Activated CD8-positive, alpha-beta memory T cell treated with anti-CD3 and anti-CD28 coated beads, Interleukin-2, amount 10 ng/mL, durations not matched to agents 7 days and 5 days (primary cell): ENCODE measurements at regions of chr7 and their contacts with region 1.

Region 1: GRCh38 chr7:95511716-95512260 is 26.0 kb downstream of the ASB4 start:
- DNase-seq: peak; percentile 78
- ATAC-seq: peak; percentile 86
- H3K4me3 Mint-ChIP-seq: no peak overlapping the region
- H3K27ac Mint-ChIP-seq: no peak overlapping the region
- H3K4me1 Mint-ChIP-seq: peaks cover 3% of the 10 kb centered on the region
- H3K27me3 Mint-ChIP-seq: peaks cover 43% of the 10 kb centered on the region

Region 2: DNA sequence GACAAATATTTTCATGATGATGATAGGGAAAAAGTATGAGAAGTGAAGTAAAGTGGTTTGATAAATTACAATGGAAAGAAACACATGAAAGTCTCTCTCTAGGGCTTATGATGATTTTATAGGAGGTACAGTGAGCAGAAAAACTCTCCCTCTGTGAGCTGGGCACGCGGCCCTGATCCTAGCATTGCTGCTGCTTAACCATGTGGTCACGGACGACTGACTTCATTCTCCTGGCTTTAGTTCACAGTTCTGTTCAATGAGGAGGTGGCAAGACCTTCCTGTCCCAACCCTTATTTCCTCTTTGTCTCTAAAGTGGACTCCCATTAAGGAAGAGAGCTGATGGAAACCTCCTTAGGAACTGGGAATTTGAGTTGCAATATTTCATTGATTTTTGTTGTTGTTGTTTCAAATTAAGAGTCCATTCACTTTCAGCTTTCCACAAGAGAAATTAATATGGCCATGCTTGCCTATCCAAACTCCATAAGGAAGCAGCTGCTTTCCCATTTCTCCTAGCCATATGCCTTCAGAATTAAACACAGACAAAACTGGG is 107.4 kb before region 1 on chr7:
- CTCF ChIA-PET with region 1: no interaction called
- DNase-seq: no peak
- ATAC-seq: no peak
- H3K4me3 Mint-ChIP-seq: no peak overlapping the region
- H3K27ac Mint-ChIP-seq: no peak overlapping the region
- H3K4me1 Mint-ChIP-seq: no peaks in the 10 kb centered on the region
- H3K27me3 Mint-ChIP-seq: peaks cover 2% of the 10 kb centered on the region

Region 3: GRCh38 chr7:95476904-95477594 is 34.7 kb before region 1 on chr7:
- CTCF ChIA-PET with region 1: interaction called, 20 read pairs
- DNase-seq: peak; percentile 71
- ATAC-seq: no peak
- H3K4me3 Mint-ChIP-seq: no peak overlapping the region
- H3K27ac Mint-ChIP-seq: no peak overlapping the region
- H3K4me1 Mint-ChIP-seq: peaks cover 7% of the 10 kb centered on the region
- H3K27me3 Mint-ChIP-seq: peaks cover 7% of the 10 kb centered on the region

Region 4: GRCh38 chr7:95491634-95492320 is 20.0 kb before region 1 on chr7:
- CTCF ChIA-PET with region 1: interaction called, 11 read pairs
- DNase-seq: no peak
- ATAC-seq: no peak
- H3K4me3 Mint-ChIP-seq: no peak overlapping the region
- H3K27ac Mint-ChIP-seq: no peak overlapping the region
- H3K4me1 Mint-ChIP-seq: no peaks in the 10 kb centered on the region
- H3K27me3 Mint-ChIP-seq: peaks cover 11% of the 10 kb centered on the region

Region 5: DNA sequence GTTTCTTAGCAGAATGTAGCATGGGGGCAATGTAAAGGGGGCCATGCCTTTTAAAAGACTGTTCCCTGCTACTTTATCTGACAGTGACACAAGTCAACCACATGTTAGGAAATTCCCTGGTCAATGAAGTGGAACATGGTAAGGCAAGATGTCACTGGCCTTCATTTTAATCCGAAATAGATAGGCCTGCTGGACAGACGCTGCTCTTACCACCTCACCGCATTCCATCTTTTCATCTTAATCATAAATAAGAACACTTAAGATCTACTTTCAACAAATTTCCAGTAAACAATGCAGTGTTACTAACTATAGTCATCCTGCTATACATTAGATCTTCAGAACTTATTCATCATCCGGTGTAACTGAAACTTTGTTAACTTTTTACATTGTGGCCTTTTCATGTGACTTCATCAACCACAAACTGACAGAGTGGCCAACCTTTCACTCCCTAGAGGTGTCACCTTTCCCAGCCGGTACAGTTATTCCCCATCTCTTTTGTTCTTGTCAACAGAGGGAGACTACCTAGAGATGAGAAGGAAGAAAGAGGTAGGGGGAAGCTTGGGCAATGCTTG is 10.4 kb before region 1 on chr7:
- CTCF ChIA-PET with region 1: interaction called, 25 read pairs
- DNase-seq: peak; percentile 67
- ATAC-seq: peak; percentile 89
- H3K4me3 Mint-ChIP-seq: peak overlapping the region; percentile 56
- H3K27ac Mint-ChIP-seq: peak overlapping the region; percentile 88
- H3K4me1 Mint-ChIP-seq: peaks cover 33% of the 10 kb centered on the region
- H3K27me3 Mint-ChIP-seq: no peaks in the 10 kb centered on the region

Region 6: DNA sequence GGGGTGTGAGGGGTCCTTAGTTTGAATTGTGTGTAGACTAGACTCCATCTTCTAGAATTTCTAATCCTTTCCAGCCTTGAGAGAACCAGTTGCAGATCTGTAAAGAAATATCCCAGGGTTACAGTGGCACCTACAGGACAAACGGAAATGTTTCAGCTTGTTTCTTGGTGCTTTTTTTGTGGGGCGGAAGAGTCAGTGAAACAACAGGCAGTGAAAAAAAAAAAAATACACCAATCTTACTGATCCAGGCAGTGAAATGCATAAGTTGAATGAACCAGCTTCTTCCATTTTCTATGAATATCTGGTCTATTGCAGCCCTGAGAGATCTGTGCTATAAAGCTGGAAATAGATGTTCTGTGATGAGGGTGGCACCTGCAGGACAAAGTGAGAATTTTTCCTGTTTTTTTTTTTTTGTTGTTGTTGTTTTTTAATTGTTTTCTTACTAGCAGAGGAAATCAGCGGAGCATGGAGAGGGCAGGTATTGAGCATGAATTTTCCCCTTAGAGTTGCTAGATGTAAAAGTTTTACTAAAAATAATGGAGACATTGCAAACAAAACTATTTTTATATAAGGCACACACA is 178.7 kb after region 1 on chr7:
- CTCF ChIA-PET with region 1: interaction called, 92 read pairs
- DNase-seq: no peak
- ATAC-seq: peak; percentile 57
- H3K4me3 Mint-ChIP-seq: no peak overlapping the region
- H3K27ac Mint-ChIP-seq: no peak overlapping the region
- H3K4me1 Mint-ChIP-seq: peaks cover 4% of the 10 kb centered on the region
- H3K27me3 Mint-ChIP-seq: no peaks in the 10 kb centered on the region